PC-3 (cell line): ENCODE measurements at regions of chr13 and their contacts with region 1.

Region 1: DNA sequence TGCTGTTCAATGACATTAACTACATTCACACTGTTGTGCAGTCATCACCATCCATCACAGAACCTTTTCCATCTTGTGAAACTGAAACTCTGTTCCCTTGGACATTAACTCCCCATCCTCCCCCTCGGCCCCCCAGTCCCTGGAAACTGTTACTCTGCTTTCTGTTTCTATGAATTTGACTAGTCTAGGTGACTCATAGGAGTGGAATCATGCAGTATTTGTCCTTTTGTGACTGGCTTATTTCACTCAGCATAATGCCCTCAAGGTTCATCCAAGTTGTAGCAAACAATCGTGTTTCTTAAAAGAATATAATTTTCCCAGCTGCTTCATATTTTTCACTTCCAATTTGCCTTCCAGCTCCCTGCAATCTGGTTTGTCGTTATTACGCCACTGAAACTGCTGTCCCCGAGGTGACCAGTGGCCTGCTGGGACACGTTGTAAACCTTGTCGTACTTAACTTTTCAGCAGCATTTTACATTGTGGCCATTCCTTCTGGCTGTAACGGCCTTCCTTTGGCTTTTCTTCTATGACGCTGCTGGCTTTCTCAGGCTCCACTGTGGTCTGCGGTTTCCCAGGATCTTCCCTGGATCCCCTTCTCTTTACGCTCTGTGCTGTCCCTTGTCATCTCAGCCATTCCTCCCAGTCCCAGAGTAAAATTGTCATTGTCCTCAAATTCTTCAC is 74.0 kb downstream of the DHRS12 start:
- DNase-seq: peak; percentile 74
- ATAC-seq: peak; percentile 87
- H3K4me3 ChIP-seq: no peak overlapping the region
- H3K27ac ChIP-seq: peak overlapping the region; percentile 73
- H3K4me1 ChIP-seq: peaks cover 19% of the 10 kb centered on the region
- H3K27me3 ChIP-seq: no peaks in the 10 kb centered on the region
- CTCF ChIP-seq: no peak

Region 2: DNA sequence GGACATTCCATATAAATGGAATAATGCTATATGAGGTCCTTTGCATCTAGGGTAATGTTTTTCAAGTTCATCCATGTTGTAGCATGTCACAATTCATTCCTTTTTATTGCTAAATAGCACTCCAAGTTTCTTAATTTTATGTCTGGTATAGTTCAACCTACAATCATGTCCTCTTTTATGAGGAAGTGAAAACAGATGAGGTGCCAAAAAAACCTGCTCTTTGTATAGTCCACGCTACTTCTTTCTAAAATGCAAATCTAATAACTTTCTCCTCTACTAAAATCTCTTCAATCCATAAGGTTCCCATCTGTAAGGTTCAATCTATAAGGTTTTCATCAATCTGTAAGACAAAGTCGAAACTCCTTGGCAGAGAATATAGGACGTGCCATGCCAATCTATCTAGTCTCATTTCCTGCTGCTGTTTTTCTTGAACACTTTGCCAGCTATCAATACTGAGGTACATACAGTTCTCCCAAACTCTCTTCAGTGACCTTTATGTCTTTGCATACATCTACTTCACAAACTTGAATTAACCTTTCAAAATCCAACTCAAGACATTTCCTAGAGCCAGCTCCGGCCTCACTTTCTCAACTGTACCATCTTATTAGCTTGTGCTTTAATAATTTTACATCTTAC is 310.9 kb before region 1 on chr13:
- CTCF ChIA-PET with region 1: no interaction called
- POLR2A ChIA-PET with region 1: interaction called, 11 read pairs
- intact Hi-C with region 1: no loop called
- DNase-seq: no peak
- ATAC-seq: no peak
- H3K4me3 ChIP-seq: no peak overlapping the region
- H3K27ac ChIP-seq: no peak overlapping the region
- H3K4me1 ChIP-seq: peaks cover 8% of the 10 kb centered on the region
- H3K27me3 ChIP-seq: no peaks in the 10 kb centered on the region
- CTCF ChIP-seq: no peak

Region 3: GRCh38 chr13:51435002-51435578 is 294.9 kb before region 1 on chr13:
- CTCF ChIA-PET with region 1: no interaction called
- POLR2A ChIA-PET with region 1: no interaction called
- intact Hi-C with region 1: loop called (anchors 5 kb)
- DNase-seq: peak; percentile 50
- ATAC-seq: no peak; the same call in 1 of the 2 replicates
- H3K4me3 ChIP-seq: no peak overlapping the region
- H3K27ac ChIP-seq: no peak overlapping the region
- H3K4me1 ChIP-seq: no peaks in the 10 kb centered on the region
- H3K27me3 ChIP-seq: no peaks in the 10 kb centered on the region
- CTCF ChIP-seq: peak; percentile 54

Region 4: DNA sequence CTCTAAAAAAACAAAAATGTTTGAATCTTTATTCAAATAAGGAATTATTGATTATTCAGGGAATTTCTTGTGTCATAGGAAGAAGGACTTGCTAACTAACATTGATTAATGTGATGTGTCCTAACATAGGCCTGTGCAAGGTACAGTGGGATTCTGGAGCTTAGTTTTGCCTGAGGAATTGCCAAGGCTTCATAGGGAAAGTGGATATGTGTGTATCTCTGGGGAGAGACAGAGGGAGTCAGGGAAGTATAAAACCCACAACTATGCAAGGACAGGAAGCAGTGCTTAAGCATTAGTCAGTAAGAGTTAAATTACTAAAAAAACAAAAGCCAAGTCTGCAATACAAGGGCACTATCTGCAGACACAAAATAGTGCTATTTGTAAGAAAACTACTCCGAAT is 86.1 kb before region 1 on chr13:
- CTCF ChIA-PET with region 1: no interaction called
- POLR2A ChIA-PET with region 1: no interaction called
- intact Hi-C with region 1: loop called (anchors 5 kb)
- DNase-seq: peak; percentile 83
- ATAC-seq: peak; percentile 84
- H3K4me3 ChIP-seq: peak overlapping the region; percentile 56
- H3K27ac ChIP-seq: peak overlapping the region; percentile 96
- H3K4me1 ChIP-seq: peaks cover 65% of the 10 kb centered on the region
- H3K27me3 ChIP-seq: no peaks in the 10 kb centered on the region
- CTCF ChIP-seq: no peak